ENCODE measurements at regions of chr7 and their contacts with region 1.

Region 1: GRCh38 chr7:83957333-83957732 is 237.3 kb downstream of the SEMA3A start:
- DNase-seq: no peak
- ATAC-seq: no peak
- H3K4me3 ChIP-seq: no peak overlapping the region
- H3K27ac ChIP-seq: no peak overlapping the region
- H3K4me1 ChIP-seq: no peaks in the 10 kb centered on the region
- H3K27me3 ChIP-seq: no peaks in the 10 kb centered on the region
- CTCF ChIP-seq: no peak
- EP300 ChIP-seq: no peak
- POLR2A ChIP-seq: no peak
- RAD21 ChIP-seq: no peak

Region 2: DNA sequence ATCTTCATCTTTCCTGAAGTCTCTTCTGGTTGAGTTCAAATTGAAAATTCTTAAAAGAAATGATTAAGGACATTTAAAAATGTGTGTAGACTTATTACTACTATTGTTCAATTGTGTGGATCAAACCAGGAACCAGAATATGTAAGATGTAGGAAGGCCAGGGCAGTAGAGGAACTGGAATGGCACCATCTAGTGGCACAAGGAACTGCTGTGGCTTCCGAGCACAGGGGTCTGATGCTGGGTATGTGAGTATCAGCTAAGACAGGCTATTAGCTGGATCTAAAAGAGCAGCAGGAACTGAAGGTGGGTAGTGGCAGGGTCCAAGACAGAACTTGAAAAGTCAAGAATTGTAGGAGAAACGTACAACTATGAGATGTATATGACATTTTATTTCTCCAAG is 10.1 kb before region 1 on chr7:
- CTCF ChIA-PET with region 1: interaction called, 17 read pairs
- POLR2A ChIA-PET with region 1: no interaction called
- RAD21 ChIA-PET with region 1: no interaction called
- SMC1A ChIA-PET with region 1: interaction called, 14 read pairs
- in situ Hi-C with region 1: no loop called
- intact Hi-C with region 1: no loop called
- DNase-seq: no peak
- ATAC-seq: peak; percentile 98
- H3K4me3 ChIP-seq: no peak overlapping the region
- H3K27ac ChIP-seq: no peak overlapping the region
- H3K4me1 ChIP-seq: no peaks in the 10 kb centered on the region
- H3K27me3 ChIP-seq: no peaks in the 10 kb centered on the region
- CTCF ChIP-seq: peak; percentile 49 to 70 (median 62)
- EP300 ChIP-seq: no peak
- POLR2A ChIP-seq: no peak
- RAD21 ChIP-seq: peak; percentile 54

Region 3: DNA sequence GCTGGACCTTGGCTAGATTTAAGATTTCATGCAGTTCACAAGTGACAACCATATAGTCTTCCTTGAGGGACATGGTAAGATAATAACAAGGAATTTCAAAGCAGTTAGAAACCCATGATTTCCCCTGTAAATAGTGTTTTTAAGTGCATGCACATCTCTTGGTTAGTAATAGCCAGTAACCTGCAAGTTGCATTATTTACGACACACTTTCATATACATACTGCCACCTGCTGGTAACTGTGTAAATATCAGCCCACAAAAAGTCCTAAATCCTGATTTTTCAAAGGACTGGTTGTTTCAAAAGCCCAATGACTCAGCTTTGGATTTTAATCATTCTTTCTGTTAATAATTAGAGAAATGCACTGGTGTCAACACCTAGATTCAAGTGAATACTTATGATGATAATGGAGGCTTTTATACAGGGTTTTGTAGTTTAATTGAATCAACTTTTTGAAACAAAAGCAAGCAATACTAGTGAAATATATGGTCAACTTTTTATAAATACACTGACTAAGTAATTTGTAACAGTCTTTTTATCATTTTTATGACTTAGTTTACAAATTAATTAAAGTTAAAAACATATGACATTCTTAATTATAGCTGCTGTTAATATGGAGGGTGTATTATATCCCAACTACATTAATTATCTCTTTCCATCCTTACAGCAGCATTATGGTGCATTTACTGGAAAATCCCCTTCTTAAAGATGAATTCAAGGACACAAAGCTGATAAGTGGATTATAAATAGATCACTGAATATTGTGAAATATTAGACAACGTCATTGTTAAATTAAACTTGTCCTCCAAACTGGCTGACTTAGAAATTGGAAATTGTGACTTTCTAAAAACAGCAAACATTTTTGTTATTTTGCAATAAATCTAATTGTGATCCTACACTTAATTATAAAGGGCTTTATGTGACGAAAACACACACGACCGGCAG is 1597.2 kb after region 1 on chr7:
- CTCF ChIA-PET with region 1: no interaction called
- POLR2A ChIA-PET with region 1: no interaction called
- RAD21 ChIA-PET with region 1: no interaction called
- SMC1A ChIA-PET with region 1: no interaction called
- in situ Hi-C with region 1: loop called (anchors 25 kb)
- intact Hi-C with region 1: no loop called
- DNase-seq: no peak
- ATAC-seq: peak; percentile 74
- H3K4me3 ChIP-seq: no peak overlapping the region
- H3K27ac ChIP-seq: no peak overlapping the region
- H3K4me1 ChIP-seq: no peaks in the 10 kb centered on the region
- H3K27me3 ChIP-seq: no peaks in the 10 kb centered on the region
- CTCF ChIP-seq: peak; percentile 48 to 66 (median 66); a peak in 5 of 6 replicates
- EP300 ChIP-seq: no peak
- POLR2A ChIP-seq: no peak
- RAD21 ChIP-seq: peak; percentile 69